Activated CD8-positive, alpha-beta T cell treated with anti-CD3 and anti-CD28 coated beads for 36 hours (primary cell): ENCODE measurements at regions of chr2 and their contacts with region 1.

Region 1: DNA sequence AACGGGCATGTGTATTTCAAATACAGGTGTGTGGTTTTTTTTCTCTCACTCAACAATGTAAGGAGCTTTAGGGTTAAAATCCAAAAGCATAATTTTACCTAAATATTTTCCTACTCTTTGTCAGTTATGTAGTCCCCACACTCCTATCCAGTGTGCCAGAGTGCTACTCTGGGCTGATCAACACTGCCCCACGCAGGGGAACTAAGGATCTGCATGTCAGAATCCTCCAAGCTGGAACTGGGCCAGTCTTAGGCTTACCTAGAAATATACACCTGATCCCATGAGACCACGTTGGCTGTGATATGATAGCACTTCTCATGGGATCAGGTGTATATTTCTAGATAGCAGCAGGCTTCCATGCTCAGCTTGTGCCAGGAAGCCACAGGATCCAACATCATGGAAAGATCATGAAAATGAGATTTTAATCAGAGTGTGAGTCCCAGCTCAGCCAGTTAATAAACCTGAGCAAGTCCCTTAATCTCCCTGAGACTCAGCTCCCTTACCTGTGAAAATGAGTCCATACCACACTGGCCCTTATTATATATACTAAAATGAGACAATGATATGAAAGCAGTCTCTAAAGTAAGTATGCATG is 29.7 kb downstream of the CCDC141 start:
- DNase-seq: peak; percentile 75
- ATAC-seq: peak; percentile 94
- H3K4me3 Mint-ChIP-seq: no peak overlapping the region
- H3K27ac Mint-ChIP-seq: no peak overlapping the region
- H3K4me1 Mint-ChIP-seq: peaks cover 30% of the 10 kb centered on the region
- H3K27me3 Mint-ChIP-seq: no peaks in the 10 kb centered on the region
- CTCF ChIP-seq: peak; percentile 63

Region 2: GRCh38 chr2:178891265-178891958 is 128.8 kb before region 1 on chr2:
- CTCF ChIA-PET with region 1: interaction called, 45 read pairs
- POLR2A ChIA-PET with region 1: no interaction called
- intact Hi-C with region 1: no loop called
- DNase-seq: peak; percentile 83
- ATAC-seq: peak; percentile 98
- H3K4me3 Mint-ChIP-seq: no peak overlapping the region
- H3K27ac Mint-ChIP-seq: no peak overlapping the region
- H3K4me1 Mint-ChIP-seq: peaks cover 3% of the 10 kb centered on the region
- H3K27me3 Mint-ChIP-seq: no peaks in the 10 kb centered on the region
- CTCF ChIP-seq: peak; percentile 95

Region 3: GRCh38 chr2:178998539-178998938 is 21.7 kb before region 1 on chr2:
- CTCF ChIA-PET with region 1: interaction called, 15 read pairs
- POLR2A ChIA-PET with region 1: no interaction called
- intact Hi-C with region 1: no loop called
- DNase-seq: no peak
- ATAC-seq: no peak
- H3K4me3 Mint-ChIP-seq: no peak overlapping the region
- H3K27ac Mint-ChIP-seq: no peak overlapping the region
- H3K4me1 Mint-ChIP-seq: peaks cover 16% of the 10 kb centered on the region
- H3K27me3 Mint-ChIP-seq: no peaks in the 10 kb centered on the region
- CTCF ChIP-seq: no peak

Region 4: GRCh38 chr2:179031731-179032408 is 11.6 kb after region 1 on chr2:
- CTCF ChIA-PET with region 1: interaction called, 20 read pairs
- POLR2A ChIA-PET with region 1: interaction called, 4 read pairs
- intact Hi-C with region 1: no loop called
- DNase-seq: peak; percentile 61
- ATAC-seq: peak; percentile 90
- H3K4me3 Mint-ChIP-seq: peak overlapping the region; percentile 71
- H3K27ac Mint-ChIP-seq: peak overlapping the region; percentile 92
- H3K4me1 Mint-ChIP-seq: peaks cover 37% of the 10 kb centered on the region
- H3K27me3 Mint-ChIP-seq: no peaks in the 10 kb centered on the region
- CTCF ChIP-seq: no peak

Region 5: GRCh38 chr2:179044500-179044899 is 24.2 kb after region 1 on chr2:
- CTCF ChIA-PET with region 1: interaction called, 13 read pairs
- POLR2A ChIA-PET with region 1: no interaction called
- intact Hi-C with region 1: no loop called
- DNase-seq: no peak
- ATAC-seq: no peak
- H3K4me3 Mint-ChIP-seq: no peak overlapping the region
- H3K27ac Mint-ChIP-seq: peak overlapping the region; percentile 1
- H3K4me1 Mint-ChIP-seq: peaks cover 52% of the 10 kb centered on the region
- H3K27me3 Mint-ChIP-seq: no peaks in the 10 kb centered on the region
- CTCF ChIP-seq: no peak

Region 6: DNA sequence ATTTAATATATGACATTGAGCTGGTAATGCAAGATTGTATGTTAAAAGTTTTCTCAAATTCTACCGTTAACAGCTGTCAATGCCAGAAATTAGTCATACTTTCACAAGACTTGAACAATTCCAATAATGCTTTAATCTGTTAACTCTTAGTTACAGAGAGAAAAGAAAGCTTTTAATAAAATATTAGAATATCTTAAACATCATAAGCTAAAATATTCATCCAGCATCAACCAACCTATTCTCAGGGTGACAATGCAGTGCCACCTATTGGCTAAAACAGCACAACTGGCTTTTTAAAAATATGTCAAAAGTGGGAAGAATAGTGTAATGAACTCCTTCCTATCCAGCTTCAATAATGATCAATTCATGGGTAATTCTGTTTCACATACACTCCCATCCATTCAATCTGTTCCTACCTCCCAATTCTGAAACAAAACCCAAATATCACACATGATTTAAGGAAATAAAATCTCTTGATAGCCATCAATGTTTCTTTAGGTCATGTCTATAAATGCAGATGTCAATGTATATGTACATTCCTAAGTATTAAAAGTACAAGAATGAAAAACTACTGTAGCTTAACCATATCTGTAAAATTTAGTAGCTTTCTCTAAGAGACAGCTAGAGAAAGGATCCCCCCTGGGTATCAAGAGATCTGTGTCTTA is 109.5 kb after region 1 on chr2:
- CTCF ChIA-PET with region 1: interaction called, 34 read pairs
- POLR2A ChIA-PET with region 1: no interaction called
- intact Hi-C with region 1: no loop called
- DNase-seq: peak; percentile 22
- ATAC-seq: no peak
- H3K4me3 Mint-ChIP-seq: no peak overlapping the region
- H3K27ac Mint-ChIP-seq: no peak overlapping the region
- H3K4me1 Mint-ChIP-seq: no peaks in the 10 kb centered on the region
- H3K27me3 Mint-ChIP-seq: no peaks in the 10 kb centered on the region
- CTCF ChIP-seq: peak; percentile 75